ENCODE measurements at regions of chr21 and their contacts with region 1.

Region 1: GRCh38 chr21:35840197-35840799 is 220.0 kb downstream of the SETD4 start:
- DNase-seq: peak; percentile 82
- ATAC-seq: peak; percentile 81
- H3K4me3 ChIP-seq: no peak overlapping the region
- H3K27ac ChIP-seq: no peak overlapping the region
- H3K4me1 ChIP-seq: no peaks in the 10 kb centered on the region
- H3K27me3 ChIP-seq: no peaks in the 10 kb centered on the region
- CTCF ChIP-seq: peak; percentile 98

Region 2: GRCh38 chr21:34693192-34693810 is 1147.0 kb before region 1 on chr21:
- CTCF ChIA-PET with region 1: no interaction called
- POLR2A ChIA-PET with region 1: no interaction called
- intact Hi-C with region 1: loop called (anchors 1 kb)
- DNase-seq: peak; percentile 83
- ATAC-seq: peak; percentile 65
- H3K4me3 ChIP-seq: no peak overlapping the region
- H3K27ac ChIP-seq: no peak overlapping the region
- H3K4me1 ChIP-seq: peaks cover 38% of the 10 kb centered on the region
- H3K27me3 ChIP-seq: no peaks in the 10 kb centered on the region
- CTCF ChIP-seq: peak; percentile 93

Region 3: DNA sequence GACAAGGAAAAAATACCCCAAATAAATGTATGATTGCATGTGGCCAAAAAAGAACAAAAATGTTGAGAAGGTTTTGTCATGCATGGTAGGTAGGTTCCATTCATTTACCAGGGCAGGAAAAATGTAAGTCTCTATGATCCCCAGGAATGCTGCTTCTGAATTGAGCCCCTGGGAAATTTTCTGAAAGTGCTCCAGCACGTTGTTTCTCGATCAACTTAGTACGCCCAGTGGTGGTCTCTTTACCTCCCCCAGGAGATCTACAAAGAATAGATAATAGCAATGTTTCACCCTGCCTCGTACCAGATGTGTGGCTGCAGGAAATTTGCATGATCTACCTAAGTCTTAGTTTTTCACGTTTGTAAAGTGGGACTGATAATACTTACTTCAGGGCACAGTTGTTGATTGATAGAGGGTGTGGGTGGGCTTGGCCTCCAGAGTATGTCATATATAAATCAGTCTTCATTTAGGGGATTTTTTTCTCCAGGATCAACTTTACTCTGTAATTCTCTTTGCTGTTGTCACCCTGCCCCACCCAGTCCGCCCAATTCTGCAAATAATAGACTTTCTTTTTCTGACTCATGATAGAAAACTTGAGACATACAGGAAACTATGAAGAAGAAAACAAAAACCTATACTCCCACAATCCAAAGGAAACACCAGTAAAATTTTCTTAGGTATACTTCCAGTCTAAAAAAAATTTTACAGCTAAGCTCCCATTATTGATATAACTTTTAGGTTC is 329.2 kb before region 1 on chr21:
- CTCF ChIA-PET with region 1: interaction called, 3 read pairs
- POLR2A ChIA-PET with region 1: no interaction called
- intact Hi-C with region 1: loop called (anchors 5 kb)
- DNase-seq: peak; percentile 89
- ATAC-seq: peak; percentile 87
- H3K4me3 ChIP-seq: peak overlapping the region; percentile 20; the same call in 1 of the 2 replicates
- H3K27ac ChIP-seq: peak overlapping the region; percentile 95
- H3K4me1 ChIP-seq: peaks cover 40% of the 10 kb centered on the region
- H3K27me3 ChIP-seq: no peaks in the 10 kb centered on the region
- CTCF ChIP-seq: no peak

Region 4: GRCh38 chr21:35616090-35616489 is 224.2 kb before region 1 on chr21:
- CTCF ChIA-PET with region 1: interaction called, 4 read pairs
- POLR2A ChIA-PET with region 1: no interaction called
- intact Hi-C with region 1: loop called (anchors 1 kb)
- DNase-seq: peak; percentile 49
- ATAC-seq: no peak; the same call in 1 of the 2 replicates
- H3K4me3 ChIP-seq: no peak overlapping the region
- H3K27ac ChIP-seq: no peak overlapping the region
- H3K4me1 ChIP-seq: peaks cover 22% of the 10 kb centered on the region
- H3K27me3 ChIP-seq: no peaks in the 10 kb centered on the region
- CTCF ChIP-seq: peak; percentile 72

Region 5: GRCh38 chr21:35674895-35675470 is 165.3 kb before region 1 on chr21:
- CTCF ChIA-PET with region 1: interaction called, 3 read pairs
- POLR2A ChIA-PET with region 1: no interaction called
- intact Hi-C with region 1: loop called (anchors 1 kb)
- DNase-seq: peak; percentile 46
- ATAC-seq: peak; percentile 38
- H3K4me3 ChIP-seq: no peak overlapping the region
- H3K27ac ChIP-seq: no peak overlapping the region
- H3K4me1 ChIP-seq: peaks cover 14% of the 10 kb centered on the region; the same call in 1 of the 2 replicates
- H3K27me3 ChIP-seq: no peaks in the 10 kb centered on the region
- CTCF ChIP-seq: 0 out of 2 replicates have a peak, but pooled peaks have one; percentile 20

Region 6: GRCh38 chr21:35862969-35863368 is 22.7 kb after region 1 on chr21:
- CTCF ChIA-PET with region 1: no interaction called
- POLR2A ChIA-PET with region 1: no interaction called
- intact Hi-C with region 1: no loop called
- DNase-seq: no peak
- ATAC-seq: no peak
- H3K4me3 ChIP-seq: no peak overlapping the region
- H3K27ac ChIP-seq: no peak overlapping the region
- H3K4me1 ChIP-seq: no peaks in the 10 kb centered on the region
- H3K27me3 ChIP-seq: no peaks in the 10 kb centered on the region
- CTCF ChIP-seq: no peak

Region 7: GRCh38 chr21:35940074-35940927 is 100.0 kb after region 1 on chr21:
- CTCF ChIA-PET with region 1: interaction called, 3 read pairs
- POLR2A ChIA-PET with region 1: no interaction called
- intact Hi-C with region 1: loop called (anchors 1 kb)
- DNase-seq: peak; percentile 86
- ATAC-seq: peak; percentile 99
- H3K4me3 ChIP-seq: no peak overlapping the region
- H3K27ac ChIP-seq: no peak overlapping the region
- H3K4me1 ChIP-seq: peaks cover 4% of the 10 kb centered on the region
- H3K27me3 ChIP-seq: no peaks in the 10 kb centered on the region
- CTCF ChIP-seq: peak; percentile 91

Region 8: GRCh38 chr21:36028127-36029069 is 188.1 kb after region 1 on chr21:
- CTCF ChIA-PET with region 1: no interaction called
- POLR2A ChIA-PET with region 1: no interaction called
- intact Hi-C with region 1: loop called (anchors 1 kb)
- DNase-seq: peak; percentile 89
- ATAC-seq: peak; percentile 97
- H3K4me3 ChIP-seq: no peak overlapping the region
- H3K27ac ChIP-seq: no peak overlapping the region
- H3K4me1 ChIP-seq: no peaks in the 10 kb centered on the region
- H3K27me3 ChIP-seq: no peaks in the 10 kb centered on the region
- CTCF ChIP-seq: peak; percentile 97